Naive thymus-derived CD8-positive, alpha-beta T cell (primary cell): ENCODE measurements at regions of chr14 and their contacts with region 1.

Region 1: DNA sequence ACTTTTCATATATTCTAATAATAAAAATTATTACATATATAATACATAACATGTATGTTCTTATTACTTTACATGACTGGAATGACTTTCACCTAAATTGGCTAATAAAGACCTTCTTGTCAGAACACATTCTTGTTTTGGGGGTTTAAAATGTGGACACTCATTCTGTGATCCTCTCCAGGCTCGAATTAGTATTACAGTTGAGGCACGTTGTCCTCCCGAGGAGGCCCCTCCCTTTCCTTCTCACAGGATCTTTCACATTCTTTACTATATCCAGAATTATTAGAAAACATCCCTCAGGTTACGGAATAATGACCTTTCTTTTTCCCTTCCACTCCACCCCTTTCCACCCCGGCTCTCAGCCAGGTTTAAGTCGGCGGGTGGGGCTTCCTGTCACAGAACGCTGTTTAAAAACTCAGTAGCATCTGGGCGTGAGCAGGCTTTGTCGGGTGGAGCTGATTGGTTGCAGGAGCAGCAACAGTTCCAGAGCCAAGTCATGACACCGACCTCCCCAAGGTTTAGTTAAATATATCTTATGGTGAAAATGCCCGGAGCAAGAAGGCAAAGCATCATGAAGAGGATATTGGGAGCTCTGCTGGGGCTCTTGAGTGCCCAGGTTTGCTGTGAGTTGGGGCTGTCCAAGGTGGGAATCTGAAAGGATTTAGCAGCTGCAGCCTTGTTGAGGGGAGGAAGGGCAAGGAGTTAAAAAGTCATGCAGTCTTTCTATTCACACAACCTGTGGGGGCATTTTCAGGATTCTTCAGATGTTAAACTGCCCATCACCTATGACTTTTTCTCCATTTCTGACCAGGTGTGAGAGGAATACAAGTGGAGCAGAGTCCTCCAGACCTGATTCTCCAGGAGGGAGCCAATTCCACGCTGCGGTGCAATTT is 396.7 kb upstream of the OR4E1 start:
- DNase-seq: peak; percentile 21 to 74 (median 47)
- ATAC-seq: peak; percentile 78 to 81
- H3K4me3 Mint-ChIP-seq: peak overlapping the region; percentile 90 to 96 (median 94)
- H3K27ac Mint-ChIP-seq: peak overlapping the region; percentile 82 to 97 (median 94)
- H3K4me1 Mint-ChIP-seq: peaks cover 4 to 61% (median 49%) of the 10 kb centered on the region in 4 donors
- H3K27me3 Mint-ChIP-seq: peaks cover 0 to 9% (median 0%) of the 10 kb centered on the region in 5 donors

Region 2: GRCh38 chr14:22052795-22053194 is 17.6 kb before region 1 on chr14:
- POLR2A ChIA-PET with region 1: interaction called, 18 read pairs
- DNase-seq: peak in 2 of 10 donors; percentile 3 to 25
- ATAC-seq: peak; percentile 71 to 84
- H3K4me3 Mint-ChIP-seq: peak overlapping the region; percentile 73 to 95 (median 88)
- H3K27ac Mint-ChIP-seq: peak overlapping the region in 9 of 10 donors; percentile 88 to 99 (median 93)
- H3K4me1 Mint-ChIP-seq: peaks cover 9 to 46% (median 26%) of the 10 kb centered on the region in 4 donors
- H3K27me3 Mint-ChIP-seq: peaks cover 0 to 4% (median 0%) of the 10 kb centered on the region in 5 donors

Region 3: DNA sequence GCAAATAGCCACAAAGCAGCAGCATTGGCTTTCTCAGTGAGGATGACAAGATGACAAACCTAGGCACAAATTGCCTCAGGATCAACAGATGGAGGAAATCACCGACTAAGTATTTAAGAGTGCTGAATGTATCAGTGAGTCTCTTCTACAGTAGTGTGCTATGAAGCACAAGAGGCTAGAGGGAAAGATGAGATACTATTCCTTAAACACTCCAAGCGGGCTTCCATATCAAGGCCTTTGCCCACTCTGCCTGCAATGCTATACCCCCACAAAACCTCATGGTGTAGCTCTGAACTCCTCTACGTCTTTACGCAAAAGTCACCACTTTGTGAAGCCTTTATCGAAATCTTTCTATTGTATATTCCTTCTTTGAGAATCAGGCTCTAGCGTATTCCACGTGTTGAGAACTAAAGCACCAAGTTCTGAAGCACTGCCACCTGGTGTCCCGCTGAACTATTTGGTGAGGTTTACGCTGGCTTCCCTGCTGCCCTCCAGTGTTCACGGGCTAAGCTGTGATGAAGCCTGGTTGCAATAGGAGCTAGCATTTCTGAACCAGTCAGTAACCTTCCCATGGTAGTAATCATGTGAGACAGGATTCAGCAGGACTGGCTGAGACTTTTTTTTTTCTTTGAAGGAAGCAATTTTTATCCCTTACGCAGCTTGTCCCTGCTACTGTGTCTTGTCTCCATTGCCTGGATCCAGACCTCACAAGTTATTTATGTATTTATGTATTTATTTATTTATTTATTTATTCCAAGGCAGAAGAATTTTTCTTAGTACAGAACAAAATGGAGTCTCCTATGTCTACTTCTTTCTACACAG is 29.8 kb after region 1 on chr14:
- POLR2A ChIA-PET with region 1: interaction called, 12 read pairs
- DNase-seq: peak; percentile 10 to 78 (median 56)
- ATAC-seq: peak; percentile 70 to 74
- H3K4me3 Mint-ChIP-seq: peak overlapping the region in 3 of 10 donors; percentile 2 to 52 (median 43)
- H3K27ac Mint-ChIP-seq: peak overlapping the region in 2 of 10 donors; percentile 8 to 56
- H3K4me1 Mint-ChIP-seq: peaks cover 4 to 52% (median 50%) of the 10 kb centered on the region in 4 donors
- H3K27me3 Mint-ChIP-seq: peaks cover 0 to 3% (median 0%) of the 10 kb centered on the region in 5 donors

Region 4: GRCh38 chr14:22131749-22132476 is 61.5 kb after region 1 on chr14:
- POLR2A ChIA-PET with region 1: no interaction called
- DNase-seq: peak in 4 of 10 donors; percentile 2 to 56 (median 24)
- ATAC-seq: no peak
- H3K4me3 Mint-ChIP-seq: no peak overlapping the region
- H3K27ac Mint-ChIP-seq: peak overlapping the region in 1 of 10 donors; percentile 11
- H3K4me1 Mint-ChIP-seq: peaks cover 0 to 11% (median 3%) of the 10 kb centered on the region in 4 donors
- H3K27me3 Mint-ChIP-seq: peaks cover 0 to 11% (median 0%) of the 10 kb centered on the region in 5 donors